H1 (cell line): ENCODE measurements at regions of chr17 and their contacts with region 1.

Region 1: DNA sequence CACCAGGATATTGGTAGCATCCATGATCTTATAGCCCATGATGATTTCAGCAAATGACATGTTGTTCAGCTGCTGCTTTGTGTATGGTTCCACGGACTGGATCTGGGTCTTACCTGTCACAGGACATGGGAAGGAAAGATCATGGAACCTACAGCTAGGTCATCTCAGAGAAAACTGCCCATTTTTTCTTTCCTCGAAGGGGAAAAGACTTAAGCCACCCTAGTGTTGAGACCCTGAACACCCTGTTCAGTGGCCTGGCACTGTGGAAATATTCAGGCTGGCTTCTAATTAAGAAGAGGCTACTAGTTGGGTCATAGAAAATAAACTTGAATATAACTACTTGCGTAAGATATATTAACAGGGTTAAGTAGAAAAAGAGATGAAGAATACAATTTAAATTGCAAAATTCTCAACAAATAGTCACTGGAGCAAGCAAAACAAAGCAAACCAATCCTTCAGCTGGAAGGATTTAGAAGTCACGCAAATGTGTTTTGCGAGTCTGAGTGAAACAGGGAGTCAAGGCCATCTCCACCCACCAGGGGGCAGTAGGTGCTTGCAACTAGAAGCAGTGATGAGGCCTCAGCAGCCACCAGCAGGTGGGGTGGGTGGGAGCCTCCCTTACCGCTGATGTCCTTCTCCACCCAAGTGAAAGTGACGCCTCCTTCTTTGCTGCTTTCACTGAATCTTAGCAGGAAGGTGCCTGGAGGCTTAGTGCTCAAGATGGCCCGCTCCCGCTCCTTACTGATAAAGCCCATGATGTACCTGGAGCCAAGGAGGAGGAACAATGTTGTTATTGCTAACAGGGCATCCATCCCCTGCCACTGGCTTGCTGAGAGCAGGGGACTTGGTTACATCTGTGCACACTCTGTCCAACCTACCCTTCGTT is 34.3 kb downstream of the STAT5A start:
- DNase-seq: peak; percentile 92 to 97
- H3K4me3 ChIP-seq: no peak overlapping the region
- H3K27ac ChIP-seq: no peak overlapping the region
- H3K4me1 ChIP-seq: peaks cover 0 to 6% (median 2%) of the 10 kb centered on the region in 4 experiments; a peak in 3 of 7 replicates
- H3K27me3 ChIP-seq: no peaks in the 10 kb centered on the region
- CTCF ChIP-seq: peak; percentile 100
- EP300 ChIP-seq: no peak
- POLR2A ChIP-seq: no peak
- RAD21 ChIP-seq: peak; percentile 99 to 100

Region 2: GRCh38 chr17:42334677-42335076 is 12.1 kb after region 1 on chr17:
- CTCF ChIA-PET with region 1: interaction called, 13 read pairs
- POLR2A ChIA-PET with region 1: interaction called, 5 read pairs
- DNase-seq: no peak
- H3K4me3 ChIP-seq: no peak overlapping the region
- H3K27ac ChIP-seq: no peak overlapping the region
- H3K4me1 ChIP-seq: peaks cover 0 to 9% (median 6%) of the 10 kb centered on the region in 4 experiments; a peak in 4 of 7 replicates
- H3K27me3 ChIP-seq: no peaks in the 10 kb centered on the region
- CTCF ChIP-seq: no peak
- EP300 ChIP-seq: no peak
- POLR2A ChIP-seq: no peak
- RAD21 ChIP-seq: no peak

Region 3: GRCh38 chr17:42609182-42609813 is 286.7 kb after region 1 on chr17 and contains the starts of genes RETREG3 and TUBG1:
- CTCF ChIA-PET with region 1: no interaction called
- POLR2A ChIA-PET with region 1: no interaction called
- DNase-seq: peak; percentile 97 to 98
- H3K4me3 ChIP-seq: peak within 1 kb of the TSS; percentile 73 to 98 (median 91)
- H3K27ac ChIP-seq: peak within 1 kb of the TSS; percentile 46; the same call in 1 of the 2 replicates
- H3K4me1 ChIP-seq: peaks cover 0 to 4% (median 2%) of the 10 kb centered on the region in 4 experiments; a peak in 6 of 7 replicates
- H3K27me3 ChIP-seq: no peaks in the 10 kb centered on the region
- CTCF ChIP-seq: peak in 1 of 3 experiments; percentile 12; a peak in 1 of 4 replicates
- EP300 ChIP-seq: no peak
- POLR2A ChIP-seq: peak; percentile 66 to 77
- RAD21 ChIP-seq: peak in 1 of 2 experiments; percentile 31; a peak in 2 of 4 replicates
- total RNA-seq, gene RETREG3: 39.6 and 42.6 TPM in 2 replicates
- total RNA-seq, gene TUBG1: 107 and 109 TPM in 2 replicates